Activated CD4-positive, alpha-beta memory T cell treated with anti-CD3 and anti-CD28 coated beads for 36 hours (primary cell): ENCODE measurements at regions of chr6 and their contacts with region 1.

Region 1: DNA sequence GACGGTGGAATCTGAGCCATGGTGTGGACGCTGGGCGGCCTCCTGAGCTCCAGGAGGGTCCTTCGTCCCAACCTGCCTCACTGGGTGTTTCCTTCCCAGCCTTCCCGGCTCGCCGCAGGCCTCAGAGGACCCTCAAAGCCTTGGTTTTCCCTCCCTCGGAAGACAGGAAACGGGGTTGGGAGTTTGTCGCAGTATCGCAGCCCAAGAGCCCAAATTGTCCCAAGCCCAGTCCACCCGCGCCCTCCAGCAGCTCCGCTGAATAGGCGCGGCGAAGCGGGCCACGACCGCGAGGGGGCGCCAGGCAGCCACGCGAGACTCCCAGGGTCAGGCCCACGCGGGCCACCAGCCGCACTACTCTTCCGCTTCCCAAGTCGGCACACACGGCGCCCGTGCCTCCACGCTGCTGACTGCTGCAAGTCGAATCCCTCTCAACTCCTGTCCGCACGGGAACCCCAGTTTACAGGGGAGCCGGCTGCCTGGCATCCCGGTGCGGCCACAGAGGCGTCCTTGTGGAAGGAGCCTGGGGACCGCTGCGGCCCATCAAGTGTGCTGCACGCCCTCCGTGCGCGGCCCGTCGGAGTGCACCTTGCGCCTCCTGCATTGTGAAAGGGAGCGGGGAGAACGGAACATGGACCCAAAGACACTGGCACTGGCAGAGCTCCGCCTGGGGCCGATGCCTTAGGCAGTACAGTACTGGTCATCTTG is 40.4 kb upstream of the HMGA1 start:
- DNase-seq: peak; percentile 91
- H3K4me3 Mint-ChIP-seq: peak overlapping the region; percentile 72
- H3K27ac Mint-ChIP-seq: no peak overlapping the region
- H3K4me1 Mint-ChIP-seq: peaks cover 15% of the 10 kb centered on the region
- H3K27me3 Mint-ChIP-seq: no peaks in the 10 kb centered on the region

Region 2: GRCh38 chr6:34161857-34162515 is 34.3 kb before region 1 on chr6:
- CTCF ChIA-PET with region 1: interaction called, 22 read pairs
- POLR2A ChIA-PET with region 1: no interaction called
- intact Hi-C with region 1: no loop called
- DNase-seq: no peak
- H3K4me3 Mint-ChIP-seq: no peak overlapping the region
- H3K27ac Mint-ChIP-seq: no peak overlapping the region
- H3K4me1 Mint-ChIP-seq: no peaks in the 10 kb centered on the region
- H3K27me3 Mint-ChIP-seq: no peaks in the 10 kb centered on the region

Region 3: GRCh38 chr6:34223956-34224940 is 28.0 kb after region 1 on chr6:
- CTCF ChIA-PET with region 1: interaction called, 19 read pairs
- POLR2A ChIA-PET with region 1: no interaction called
- intact Hi-C with region 1: loop called (anchors 2 kb)
- DNase-seq: peak; percentile 96
- H3K4me3 Mint-ChIP-seq: peak overlapping the region; percentile 52
- H3K27ac Mint-ChIP-seq: peak overlapping the region; percentile 72
- H3K4me1 Mint-ChIP-seq: peaks cover 35% of the 10 kb centered on the region
- H3K27me3 Mint-ChIP-seq: no peaks in the 10 kb centered on the region

Region 4: DNA sequence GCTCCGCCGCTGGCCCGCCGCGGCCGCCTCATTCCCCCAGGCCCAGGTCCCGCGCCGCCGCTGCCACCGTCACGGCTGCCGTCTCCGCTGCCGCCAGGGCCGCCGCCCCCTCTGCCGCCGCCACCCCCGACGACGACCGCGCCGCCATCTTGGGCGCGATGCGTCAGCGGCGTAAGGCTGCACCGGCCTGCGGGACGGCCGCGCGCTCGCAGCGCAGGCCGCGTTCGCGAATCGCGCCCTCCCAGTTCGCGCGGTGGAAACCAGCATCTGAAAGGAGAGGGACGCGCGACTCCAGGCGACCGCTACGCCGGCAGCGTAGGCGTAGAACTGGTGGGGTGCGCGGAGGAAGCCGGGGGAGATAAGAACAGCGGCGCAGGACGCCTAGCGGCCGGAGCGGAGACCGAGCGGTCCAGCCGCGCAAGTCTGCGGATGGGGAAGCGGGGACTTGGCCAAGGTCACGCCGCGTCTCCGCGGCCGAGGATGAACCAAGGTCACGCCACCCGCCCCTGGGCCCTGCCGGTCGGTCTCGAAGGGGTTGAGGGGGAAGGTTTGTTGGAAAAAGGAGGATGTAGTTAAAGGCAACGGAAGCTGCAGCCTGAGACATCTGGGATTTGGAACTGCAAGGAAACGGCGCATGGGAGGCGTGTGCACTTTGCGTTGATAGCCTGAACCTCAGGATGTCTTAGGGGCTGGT is 196.4 kb after region 1 on chr6 and contains the start of gene NUDT3:
- CTCF ChIA-PET with region 1: interaction called, 15 read pairs
- POLR2A ChIA-PET with region 1: no interaction called
- intact Hi-C with region 1: loop called (anchors 1 kb)
- DNase-seq: peak; percentile 96
- H3K4me3 Mint-ChIP-seq: peak within 1 kb of the TSS; percentile 57
- H3K27ac Mint-ChIP-seq: peak within 1 kb of the TSS; percentile 87
- H3K4me1 Mint-ChIP-seq: peaks cover 21% of the 10 kb centered on the region
- H3K27me3 Mint-ChIP-seq: no peaks in the 10 kb centered on the region
- total RNA-seq, gene NUDT3: 12.7 to 13.4 TPM

Region 5: GRCh38 chr6:34610819-34611477 is 414.7 kb after region 1 on chr6:
- CTCF ChIA-PET with region 1: interaction called, 17 read pairs
- POLR2A ChIA-PET with region 1: no interaction called
- intact Hi-C with region 1: no loop called
- DNase-seq: no peak
- H3K4me3 Mint-ChIP-seq: no peak overlapping the region
- H3K27ac Mint-ChIP-seq: no peak overlapping the region
- H3K4me1 Mint-ChIP-seq: peaks cover 15% of the 10 kb centered on the region
- H3K27me3 Mint-ChIP-seq: no peaks in the 10 kb centered on the region